ENCODE measurements at regions of chr15 and their contacts with region 1.

Region 1: GRCh38 chr15:89129123-89129815 is 41.0 kb downstream of the ABHD2 start:
- DNase-seq: no peak
- H3K4me3 ChIP-seq: no peak overlapping the region
- H3K27ac ChIP-seq: peak overlapping the region; percentile 59 to 79
- H3K4me1 ChIP-seq: peaks cover 5 to 33% of the 10 kb centered on the region in 2 donors
- H3K27me3 ChIP-seq: no peaks in the 10 kb centered on the region
- CTCF ChIP-seq: peak; percentile 52 to 69 (median 66)

Region 2: DNA sequence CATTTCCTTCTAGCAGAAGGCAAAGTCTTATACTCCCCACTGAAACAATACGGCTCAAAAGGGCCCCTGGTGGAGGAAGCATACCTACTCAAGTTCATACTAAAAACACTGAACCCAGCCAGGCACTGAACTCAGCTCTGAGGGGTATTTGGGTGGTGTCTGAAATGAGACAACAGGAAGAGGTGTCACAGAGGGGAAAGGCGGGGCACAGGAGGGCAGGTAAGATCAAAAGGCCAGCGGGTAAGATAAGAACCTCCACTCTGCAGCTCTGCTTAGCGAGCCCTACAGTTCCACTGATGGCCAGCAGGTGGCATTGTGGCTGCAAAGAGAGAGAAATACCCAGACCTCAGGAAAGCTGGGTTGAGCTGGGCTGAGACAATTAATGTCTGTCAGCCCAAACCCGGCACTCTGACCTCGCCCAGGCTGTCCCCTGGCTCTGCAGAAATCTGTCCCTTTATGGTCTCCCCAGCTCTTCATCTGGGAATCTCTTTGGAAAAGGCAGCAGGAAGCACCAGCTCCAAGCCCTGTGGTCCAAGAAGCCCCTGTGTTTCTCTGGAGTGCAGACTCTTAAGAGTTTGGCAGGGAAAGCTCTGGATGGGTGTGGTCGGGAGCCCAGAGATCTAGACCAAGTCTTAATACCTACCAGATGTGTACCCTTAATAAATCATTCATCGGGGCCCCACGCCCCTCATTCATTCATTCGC is 224.5 kb before region 1 on chr15:
- intact Hi-C with region 1: loop called (anchors 5 kb)
- DNase-seq: peak in 1 of 2 donors; percentile 93
- H3K4me3 ChIP-seq: peak overlapping the region in 1 of 2 donors; percentile 20
- H3K27ac ChIP-seq: peak overlapping the region; percentile 94
- H3K4me1 ChIP-seq: peaks cover 17 to 80% of the 10 kb centered on the region in 2 donors
- H3K27me3 ChIP-seq: no peaks in the 10 kb centered on the region
- CTCF ChIP-seq: peak; percentile 96 to 98 (median 96)